Mammary epithelial cell (primary cell): ENCODE measurements at regions of chr10 and their contacts with region 1.

Region 1: GRCh38 chr10:5948999-5949759 is 28.2 kb downstream of the IL15RA start:
- DNase-seq: peak; percentile 55
- H3K4me3 ChIP-seq: no peak overlapping the region
- H3K27ac ChIP-seq: no peak overlapping the region
- H3K4me1 ChIP-seq: peaks cover 40% of the 10 kb centered on the region
- H3K27me3 ChIP-seq: no peaks in the 10 kb centered on the region
- CTCF ChIP-seq: peak; percentile 54 to 73

Region 2: GRCh38 chr10:5977471-5978229 is 28.5 kb after region 1 on chr10 and contains the start of gene IL15RA:
- CTCF ChIA-PET with region 1: no interaction called
- dilution Hi-C with region 1: no loop called
- in situ Hi-C with region 1: no loop called
- intact Hi-C with region 1: loop called (anchors 1 kb)
- DNase-seq: peak; percentile 78
- H3K4me3 ChIP-seq: peak within 1 kb of the TSS; percentile 90 to 94 (median 93)
- H3K27ac ChIP-seq: no peak within 1 kb of the TSS
- H3K4me1 ChIP-seq: no peaks in the 10 kb centered on the region
- H3K27me3 ChIP-seq: no peaks in the 10 kb centered on the region
- CTCF ChIP-seq: peak in 1 of 2 donors; percentile 29
- total RNA-seq, gene IL15RA: 1.8 to 2.2 TPM

Region 3: GRCh38 chr10:6014241-6014761 is 65.1 kb after region 1 on chr10:
- CTCF ChIA-PET with region 1: no interaction called
- dilution Hi-C with region 1: no loop called
- in situ Hi-C with region 1: no loop called
- intact Hi-C with region 1: loop called (anchors 1 kb)
- DNase-seq: peak; percentile 32
- H3K4me3 ChIP-seq: no peak overlapping the region
- H3K27ac ChIP-seq: no peak overlapping the region
- H3K4me1 ChIP-seq: no peaks in the 10 kb centered on the region
- H3K27me3 ChIP-seq: no peaks in the 10 kb centered on the region
- CTCF ChIP-seq: peak; percentile 65 to 72

Region 4: GRCh38 chr10:6030217-6030616 is 81.0 kb after region 1 on chr10:
- CTCF ChIA-PET with region 1: no interaction called
- dilution Hi-C with region 1: no loop called
- in situ Hi-C with region 1: no loop called
- intact Hi-C with region 1: no loop called
- DNase-seq: no peak
- H3K4me3 ChIP-seq: no peak overlapping the region
- H3K27ac ChIP-seq: no peak overlapping the region
- H3K4me1 ChIP-seq: no peaks in the 10 kb centered on the region
- H3K27me3 ChIP-seq: peaks cover 2% of the 10 kb centered on the region
- CTCF ChIP-seq: no peak

Region 5: DNA sequence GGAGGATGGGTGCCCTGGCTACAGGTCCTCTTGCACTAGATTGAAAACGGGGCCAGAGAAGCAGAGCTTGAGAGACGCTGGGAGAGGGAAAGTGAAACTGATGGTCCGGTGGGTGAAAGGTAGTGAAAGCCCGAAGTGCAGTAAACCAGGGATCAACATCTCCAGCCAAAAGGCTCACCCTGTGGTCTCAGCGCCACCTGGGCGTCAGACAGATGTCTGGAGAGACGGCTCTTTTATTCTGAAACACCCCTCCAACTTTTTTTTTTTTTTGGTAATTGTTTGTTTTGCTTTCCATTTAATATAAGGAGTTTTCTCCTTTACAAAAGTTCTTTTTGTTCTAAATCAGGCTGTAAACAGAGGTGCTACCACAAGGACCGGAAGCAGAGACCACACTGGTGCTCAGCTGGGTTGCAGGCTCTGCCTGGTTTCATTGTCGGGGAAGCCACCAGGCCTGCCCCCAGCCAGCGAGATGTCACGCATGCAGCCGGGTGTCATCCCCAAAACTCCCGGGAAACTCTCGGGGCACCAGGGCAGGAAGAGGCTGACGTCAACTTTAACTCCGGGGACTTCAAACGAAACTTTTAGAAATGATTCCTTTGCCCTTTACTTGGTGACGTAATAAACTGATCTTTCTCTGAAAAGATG is 101.7 kb after region 1 on chr10:
- CTCF ChIA-PET with region 1: interaction called, 14 read pairs
- dilution Hi-C with region 1: no loop called
- in situ Hi-C with region 1: no loop called
- intact Hi-C with region 1: no loop called
- DNase-seq: peak; percentile 44
- H3K4me3 ChIP-seq: peak overlapping the region; percentile 27 to 31 (median 31)
- H3K27ac ChIP-seq: no peak overlapping the region
- H3K4me1 ChIP-seq: peaks cover 19% of the 10 kb centered on the region
- H3K27me3 ChIP-seq: peaks cover 4% of the 10 kb centered on the region
- CTCF ChIP-seq: peak in 1 of 2 donors; percentile 47

Region 6: GRCh38 chr10:6088721-6089390 is 139.7 kb after region 1 on chr10 and contains the start of gene RBM17:
- CTCF ChIA-PET with region 1: interaction called, 8 read pairs
- dilution Hi-C with region 1: no loop called
- in situ Hi-C with region 1: loop called in 1 of 2 experiments (anchors 10 kb)
- intact Hi-C with region 1: loop called (anchors 1 kb)
- DNase-seq: peak; percentile 89
- H3K4me3 ChIP-seq: peak within 1 kb of the TSS; percentile 74 to 77 (median 76)
- H3K27ac ChIP-seq: peak within 1 kb of the TSS; percentile 82
- H3K4me1 ChIP-seq: peaks cover 15% of the 10 kb centered on the region
- H3K27me3 ChIP-seq: peaks cover 2% of the 10 kb centered on the region
- CTCF ChIP-seq: peak; percentile 100
- total RNA-seq, gene RBM17: 31.5 to 120 TPM